ENCODE measurements at regions of chr2 and their contacts with region 1.

Region 1: DNA sequence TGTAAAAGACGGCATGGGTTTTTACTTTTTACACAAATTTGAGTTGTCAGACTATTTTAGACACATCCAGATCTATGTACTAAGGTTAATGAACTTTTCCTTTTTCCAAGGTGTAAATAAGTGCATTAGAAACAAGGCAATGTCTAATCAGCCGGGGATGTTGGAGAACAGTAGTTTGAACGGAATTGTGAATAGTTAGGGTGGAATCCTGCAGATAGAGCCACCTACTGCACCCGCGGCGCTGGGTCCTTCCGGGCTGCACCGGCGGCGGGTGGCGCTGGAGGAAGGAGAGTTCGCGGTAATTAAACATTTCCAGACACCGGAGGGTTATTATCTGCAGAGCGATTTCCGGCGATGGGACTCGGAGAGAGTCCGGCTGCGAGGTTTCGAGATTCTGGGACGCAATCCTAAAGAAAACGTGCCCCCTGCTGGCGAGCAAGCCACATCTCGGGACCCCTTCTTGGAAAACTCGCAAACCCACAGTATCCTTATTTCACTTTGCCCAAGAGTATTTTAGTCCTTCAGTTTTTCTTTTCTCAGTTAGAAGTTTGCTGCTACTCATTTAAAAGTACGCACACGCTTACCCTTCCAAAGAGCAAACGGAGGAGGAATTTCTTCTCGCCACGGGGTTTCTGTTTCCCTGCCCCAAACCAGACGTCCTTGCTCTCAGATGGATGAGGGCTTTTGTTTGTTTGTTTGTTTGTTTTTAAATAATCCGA is 4.5 kb upstream of the OSR1 start:
- DNase-seq: peak; percentile 93

Region 2: GRCh38 chr2:17747684-17748452 is 1615.0 kb before region 1 on chr2:
- intact Hi-C with region 1: no loop called
- DNase-seq: no peak

Region 3: DNA sequence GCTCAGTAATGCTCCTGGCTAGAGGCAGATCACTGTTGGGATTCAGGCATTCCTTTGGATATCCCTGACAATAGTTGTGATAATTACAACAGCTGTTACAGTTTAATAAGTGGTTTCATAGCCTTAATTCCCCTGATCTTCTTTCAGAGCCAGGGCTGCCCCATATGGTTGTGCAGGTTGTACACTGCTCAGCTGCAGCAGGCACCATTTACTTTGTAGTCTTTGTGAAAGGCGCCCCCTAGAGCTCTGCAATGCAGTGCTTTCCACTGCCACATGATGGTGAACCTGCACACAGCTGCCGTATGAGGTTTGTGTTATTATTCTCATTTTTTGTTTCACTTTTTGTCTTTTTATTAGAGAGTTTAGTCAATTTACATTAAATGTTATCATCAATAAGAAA is 1245.3 kb before region 1 on chr2:
- intact Hi-C with region 1: no loop called
- DNase-seq: no peak

Region 4: DNA sequence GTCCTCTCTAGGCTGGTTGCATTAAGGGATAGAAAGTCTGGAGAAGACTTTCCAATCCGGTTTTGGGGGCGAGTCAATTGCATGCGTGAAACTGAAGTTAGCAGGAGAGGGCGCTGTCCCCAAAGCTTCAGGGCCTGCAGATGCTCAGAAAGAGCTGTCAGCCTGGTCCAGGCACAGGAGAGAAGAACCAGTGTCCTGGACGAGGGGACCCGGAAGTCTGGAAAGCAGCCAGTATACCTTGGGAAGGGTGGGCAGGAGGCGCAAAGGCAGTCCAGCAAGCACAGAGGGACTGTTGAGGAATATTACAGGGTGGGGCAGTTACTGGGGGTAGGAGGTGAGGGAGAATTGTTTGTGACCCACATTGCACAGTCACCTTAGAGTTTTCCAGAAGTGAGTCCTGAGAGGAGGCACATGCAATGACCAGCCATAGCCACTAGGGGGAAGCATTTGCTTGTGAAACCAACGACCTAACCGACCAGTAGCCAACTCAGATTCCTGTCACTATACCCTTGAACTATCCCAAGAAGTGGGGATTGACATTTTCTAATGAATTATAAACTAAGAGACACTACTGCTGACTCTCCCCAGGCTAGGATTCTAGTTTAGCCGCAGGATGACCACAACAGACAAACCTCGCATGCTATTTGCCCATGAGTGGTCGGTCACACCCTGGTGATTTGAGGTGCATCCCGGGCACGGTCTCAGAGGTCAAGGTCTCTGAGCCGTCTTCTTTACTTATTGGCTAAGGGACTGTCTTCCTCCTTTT is 975.3 kb before region 1 on chr2:
- intact Hi-C with region 1: loop called in 1 of 2 experiments (anchors 5 kb)
- DNase-seq: peak; percentile 89

Region 5: GRCh38 chr2:18435421-18436037 is 927.4 kb before region 1 on chr2:
- intact Hi-C with region 1: loop called in 1 of 2 experiments (anchors 5 kb)
- DNase-seq: no peak

Region 6: GRCh38 chr2:18749912-18750526 is 612.9 kb before region 1 on chr2:
- intact Hi-C with region 1: loop called in 1 of 2 experiments (anchors 2 kb)
- DNase-seq: no peak

Region 7: GRCh38 chr2:19863303-19864041 is 500.6 kb after region 1 on chr2:
- intact Hi-C with region 1: loop called (anchors 2 to 10 kb)
- DNase-seq: peak; percentile 93